ENCODE measurements at regions of chr10 and their contacts with region 1.

Region 1: DNA sequence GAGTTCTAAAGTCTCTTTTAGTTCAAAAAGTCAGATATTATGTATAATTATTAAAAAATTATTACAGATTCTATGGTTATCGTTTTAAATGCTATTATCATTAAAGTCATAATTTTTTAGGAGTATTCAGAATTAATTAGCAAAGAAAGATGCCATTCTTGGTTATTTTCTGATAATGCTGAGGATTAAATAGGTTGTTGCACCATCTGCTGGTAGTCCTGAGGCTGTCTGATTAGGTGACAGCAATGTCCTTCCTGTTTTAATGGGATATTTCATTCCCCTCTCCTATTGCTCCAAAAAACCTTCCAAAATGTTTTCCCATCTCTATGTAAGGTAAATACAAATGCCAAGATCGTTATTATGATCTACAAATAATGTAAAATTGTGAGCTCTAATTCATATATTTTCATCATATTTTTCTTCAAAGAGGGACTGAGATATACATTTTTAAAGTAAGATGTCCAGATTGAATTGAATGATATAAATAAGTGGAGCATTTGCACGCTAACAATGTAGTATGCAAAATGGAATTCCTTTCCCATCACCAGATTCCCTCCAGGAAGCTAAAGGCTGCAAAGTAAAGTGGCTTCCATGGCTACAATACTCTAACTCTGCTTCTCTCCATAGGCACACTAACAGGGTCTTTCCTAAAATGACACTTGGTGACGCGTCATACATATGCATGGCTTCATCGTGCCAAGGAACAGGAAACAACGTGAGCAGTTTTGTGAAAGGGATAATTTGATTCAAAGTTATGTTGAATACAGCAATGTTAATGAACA is 58.8 kb upstream of the AKR1E2 start:
- ATAC-seq: peak in 6 of 8 experiments; percentile 5 to 63 (median 46)
- H3K4me3 ChIP-seq: no peak overlapping the region
- H3K27ac ChIP-seq: no peak overlapping the region
- H3K4me1 ChIP-seq: peaks cover 3 to 32% of the 10 kb centered on the region in 2 donors

Region 2: GRCh38 chr10:3197348-3198003 is 1569.7 kb before region 1 on chr10:
- in situ Hi-C with region 1: loop called in 7 of 9 experiments (anchors 10 to 25 kb)
- ATAC-seq: peak; percentile 87 to 97 (median 96)
- H3K4me3 ChIP-seq: no peak overlapping the region
- H3K27ac ChIP-seq: no peak overlapping the region
- H3K4me1 ChIP-seq: peaks cover 15% of the 10 kb centered on the region in 2 donors

Region 3: DNA sequence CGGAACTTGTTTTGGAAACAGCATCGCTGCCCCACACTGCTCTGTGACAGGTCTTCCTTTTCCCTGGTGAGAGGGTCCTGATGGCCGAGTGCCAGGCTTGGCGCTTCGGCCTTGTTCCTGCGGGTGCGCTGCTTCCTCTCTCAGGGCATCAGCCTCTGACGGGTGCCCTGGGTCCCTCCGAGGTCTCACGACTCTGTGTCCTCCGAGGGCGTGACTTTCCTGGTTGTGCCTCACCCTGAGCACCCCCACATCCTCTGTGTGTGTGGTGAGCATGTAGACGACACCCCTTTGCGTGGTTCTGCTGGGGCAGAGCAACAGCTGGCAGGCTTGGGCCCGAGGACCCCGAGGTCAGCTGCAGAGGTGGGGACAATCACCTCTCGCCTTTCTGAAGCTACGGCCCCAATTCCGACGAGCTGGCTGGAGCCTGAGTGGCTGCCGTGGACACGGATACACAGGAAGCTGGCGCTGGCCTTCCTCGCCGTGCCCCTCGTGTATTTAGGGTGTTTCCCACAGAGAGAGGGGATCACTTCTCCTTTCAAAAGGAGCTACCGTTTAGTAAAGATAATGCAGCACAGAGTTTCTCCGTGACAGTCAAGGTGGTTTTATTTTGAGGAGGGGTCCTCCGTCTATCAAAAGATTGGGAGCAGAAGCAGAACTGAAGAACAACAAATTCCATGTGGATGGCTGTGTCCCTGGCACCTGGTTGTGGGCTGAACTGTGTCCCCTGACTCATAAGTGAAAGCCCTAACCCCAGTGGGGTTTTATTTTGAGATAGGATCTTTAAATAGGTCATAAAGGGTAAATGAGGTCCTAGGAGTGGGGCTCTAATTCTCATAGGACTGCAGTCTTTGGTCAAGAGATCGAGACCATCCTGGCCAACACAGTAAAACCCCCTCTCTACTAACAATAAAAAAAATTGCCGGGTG is 1558.5 kb before region 1 on chr10:
- in situ Hi-C with region 1: loop called in 5 of 9 experiments (anchors 10 to 25 kb)
- ATAC-seq: no peak
- H3K4me3 ChIP-seq: no peak overlapping the region
- H3K27ac ChIP-seq: no peak overlapping the region
- H3K4me1 ChIP-seq: peaks cover 3 to 18% of the 10 kb centered on the region in 2 donors

Region 4: GRCh38 chr10:3222065-3222464 is 1545.2 kb before region 1 on chr10:
- in situ Hi-C with region 1: loop called in 4 of 9 experiments (anchors 25 kb)
- ATAC-seq: peak in 2 of 8 experiments; percentile 65 to 79
- H3K4me3 ChIP-seq: no peak overlapping the region
- H3K27ac ChIP-seq: no peak overlapping the region
- H3K4me1 ChIP-seq: peaks cover 3 to 4% of the 10 kb centered on the region in 2 donors

Region 5: GRCh38 chr10:3622845-3623621 is 1144.2 kb before region 1 on chr10:
- in situ Hi-C with region 1: no loop called
- ATAC-seq: no peak
- H3K4me3 ChIP-seq: no peak overlapping the region
- H3K27ac ChIP-seq: no peak overlapping the region
- H3K4me1 ChIP-seq: peaks cover 0 to 26% of the 10 kb centered on the region in 2 donors

Region 6: DNA sequence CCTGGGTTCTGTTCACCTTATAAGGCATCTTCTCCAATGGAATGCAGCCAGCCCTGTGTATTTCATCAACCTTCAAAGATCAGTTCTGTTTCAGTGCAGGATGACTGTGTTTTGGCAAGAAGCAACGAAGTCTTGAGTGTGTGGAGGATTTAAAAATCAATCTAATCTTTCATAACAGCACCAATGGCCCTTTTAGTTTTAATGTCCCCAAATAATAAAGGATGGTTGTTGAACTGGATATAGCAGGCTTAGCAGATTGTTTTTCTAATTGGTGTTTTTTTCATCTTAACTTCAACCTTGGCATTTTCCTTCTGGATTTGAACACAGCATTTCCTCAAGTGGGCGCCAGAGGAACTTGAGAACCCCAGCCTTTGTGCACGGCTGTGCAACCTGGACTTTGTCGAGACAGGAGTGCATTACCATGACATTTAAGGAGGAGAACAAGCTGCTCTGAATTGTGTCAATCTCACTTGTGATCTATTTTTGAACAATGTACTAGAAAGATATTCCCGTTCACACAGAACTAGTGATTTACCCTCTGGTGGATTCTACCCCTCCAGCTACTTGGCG is 254.5 kb before region 1 on chr10:
- in situ Hi-C with region 1: loop called in 2 of 9 experiments (anchors 25 kb)
- ATAC-seq: peak in 4 of 8 experiments; percentile 31 to 86 (median 76)
- H3K4me3 ChIP-seq: no peak overlapping the region
- H3K27ac ChIP-seq: no peak overlapping the region
- H3K4me1 ChIP-seq: no peaks in the 10 kb centered on the region

Region 7: DNA sequence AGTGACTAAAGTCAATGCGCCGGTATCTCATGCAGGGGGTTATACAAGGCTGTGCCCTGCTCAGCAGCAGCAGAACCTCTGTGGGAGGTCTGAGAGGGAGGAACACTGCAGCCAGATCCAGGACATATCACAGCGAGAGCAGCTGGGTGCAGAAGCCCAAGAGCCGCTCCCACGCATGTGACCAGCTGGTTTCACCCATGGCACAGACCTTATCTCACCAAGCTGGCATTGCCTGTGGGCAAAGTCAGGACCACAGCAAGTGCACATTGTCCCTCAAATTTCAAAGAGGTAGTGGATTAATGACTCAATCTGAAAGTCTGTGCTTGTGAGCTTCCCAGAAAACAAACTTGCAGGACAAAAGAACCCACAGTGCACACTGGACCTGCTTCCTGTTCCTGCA is 164.4 kb after region 1 on chr10:
- in situ Hi-C with region 1: no loop called
- ATAC-seq: no peak
- H3K4me3 ChIP-seq: no peak overlapping the region
- H3K27ac ChIP-seq: no peak overlapping the region
- H3K4me1 ChIP-seq: no peaks in the 10 kb centered on the region

Region 8: GRCh38 chr10:5211696-5212536 is 444.7 kb after region 1 on chr10:
- in situ Hi-C with region 1: no loop called
- ATAC-seq: peak in 2 of 8 experiments; percentile 92 to 95
- H3K4me3 ChIP-seq: no peak overlapping the region
- H3K27ac ChIP-seq: no peak overlapping the region
- H3K4me1 ChIP-seq: no peaks in the 10 kb centered on the region

Measured in motor neuron (in vitro differentiated cells).